ENCODE measurements at regions of chr6 and their contacts with region 1.

Region 1: GRCh38 chr6:43013843-43014433 is at the starts of genes KLHDC3 and MEA1:
- DNase-seq: peak; percentile 100
- H3K4me3 Mint-ChIP-seq: peak within 1 kb of the TSS; percentile 99
- H3K27ac Mint-ChIP-seq: peak within 1 kb of the TSS; percentile 99
- H3K4me1 Mint-ChIP-seq: peaks cover 32% of the 10 kb centered on the region
- H3K27me3 Mint-ChIP-seq: no peaks in the 10 kb centered on the region
- CTCF ChIP-seq: no peak
- total RNA-seq, gene KLHDC3: 35.6 and 39.2 TPM in 2 replicates
- total RNA-seq, gene MEA1: 71.8 and 79.9 TPM in 2 replicates

Region 2: DNA sequence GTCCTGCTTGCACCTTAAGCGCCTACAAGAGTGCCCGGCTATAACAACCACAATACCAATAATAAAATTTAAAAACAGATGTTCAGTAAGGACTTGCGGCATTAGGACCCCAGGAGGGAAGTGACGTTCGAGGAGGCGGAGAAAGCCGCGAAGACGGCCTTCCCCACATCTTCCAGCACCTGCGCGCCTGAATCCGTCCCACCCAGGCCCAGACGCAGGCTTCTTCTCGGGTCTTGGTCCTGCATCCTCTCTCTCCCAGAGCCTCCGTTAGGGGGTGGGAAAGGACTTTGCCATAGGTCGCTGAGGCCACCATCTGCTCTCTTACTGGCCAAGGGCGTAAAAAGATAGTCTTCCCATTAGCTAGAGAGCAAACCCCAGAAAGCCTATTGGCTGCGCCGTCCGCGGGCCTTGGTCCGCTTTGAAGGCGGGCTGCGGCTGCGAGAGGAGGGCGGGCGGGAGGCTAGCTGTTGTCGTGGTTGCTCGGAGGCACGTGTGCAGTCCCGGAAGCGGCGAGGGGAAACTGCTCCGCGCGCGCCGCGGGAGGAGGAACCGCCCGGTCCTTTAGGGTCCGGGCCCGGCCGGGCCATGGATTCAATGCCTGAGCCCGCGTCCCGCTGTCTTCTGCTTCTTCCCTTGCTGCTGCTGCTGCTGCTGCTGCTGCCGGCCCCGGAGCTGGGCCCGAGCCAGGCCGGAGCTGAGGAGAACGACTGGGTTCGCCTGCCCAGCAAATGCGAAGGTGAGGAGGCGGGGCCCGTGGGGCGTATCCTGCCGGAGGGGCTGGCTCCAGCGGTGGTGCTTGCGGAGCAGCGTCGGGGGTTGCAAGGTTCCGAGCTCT is 84.7 kb before region 1 on chr6 and contains the start of gene CNPY3:
- CTCF ChIA-PET with region 1: no interaction called
- POLR2A ChIA-PET with region 1: interaction called, 36 read pairs
- intact Hi-C with region 1: no loop called
- DNase-seq: peak; percentile 97
- H3K4me3 Mint-ChIP-seq: peak within 1 kb of the TSS; percentile 99
- H3K27ac Mint-ChIP-seq: peak within 1 kb of the TSS; percentile 97
- H3K4me1 Mint-ChIP-seq: peaks cover 40% of the 10 kb centered on the region
- H3K27me3 Mint-ChIP-seq: no peaks in the 10 kb centered on the region
- CTCF ChIP-seq: no peak
- total RNA-seq, gene CNPY3: 21.9 and 22.5 TPM in 2 replicates

Region 3: GRCh38 chr6:42984001-42984923 is 29.7 kb before region 1 on chr6 and contains the start of gene PPP2R5D:
- CTCF ChIA-PET with region 1: interaction called, 6 read pairs
- POLR2A ChIA-PET with region 1: interaction called, 46 read pairs
- intact Hi-C with region 1: loop called (anchors 1 kb)
- DNase-seq: peak; percentile 99
- H3K4me3 Mint-ChIP-seq: peak within 1 kb of the TSS; percentile 78
- H3K27ac Mint-ChIP-seq: peak within 1 kb of the TSS; percentile 90
- H3K4me1 Mint-ChIP-seq: peaks cover 39% of the 10 kb centered on the region
- H3K27me3 Mint-ChIP-seq: no peaks in the 10 kb centered on the region
- CTCF ChIP-seq: no peak
- total RNA-seq, gene PPP2R5D: 16.5 and 17.9 TPM in 2 replicates

Region 4: GRCh38 chr6:43053545-43054205 is 39.7 kb after region 1 on chr6 and contains the start of gene CUL7:
- CTCF ChIA-PET with region 1: interaction called, 4 read pairs
- POLR2A ChIA-PET with region 1: interaction called, 53 read pairs
- intact Hi-C with region 1: loop called (anchors 5 kb)
- DNase-seq: peak; percentile 97
- H3K4me3 Mint-ChIP-seq: peak within 1 kb of the TSS; percentile 96
- H3K27ac Mint-ChIP-seq: peak within 1 kb of the TSS; percentile 98
- H3K4me1 Mint-ChIP-seq: peaks cover 36% of the 10 kb centered on the region
- H3K27me3 Mint-ChIP-seq: no peaks in the 10 kb centered on the region
- CTCF ChIP-seq: no peak
- total RNA-seq, gene CUL7: 22.7 and 31.4 TPM in 2 replicates

Region 5: DNA sequence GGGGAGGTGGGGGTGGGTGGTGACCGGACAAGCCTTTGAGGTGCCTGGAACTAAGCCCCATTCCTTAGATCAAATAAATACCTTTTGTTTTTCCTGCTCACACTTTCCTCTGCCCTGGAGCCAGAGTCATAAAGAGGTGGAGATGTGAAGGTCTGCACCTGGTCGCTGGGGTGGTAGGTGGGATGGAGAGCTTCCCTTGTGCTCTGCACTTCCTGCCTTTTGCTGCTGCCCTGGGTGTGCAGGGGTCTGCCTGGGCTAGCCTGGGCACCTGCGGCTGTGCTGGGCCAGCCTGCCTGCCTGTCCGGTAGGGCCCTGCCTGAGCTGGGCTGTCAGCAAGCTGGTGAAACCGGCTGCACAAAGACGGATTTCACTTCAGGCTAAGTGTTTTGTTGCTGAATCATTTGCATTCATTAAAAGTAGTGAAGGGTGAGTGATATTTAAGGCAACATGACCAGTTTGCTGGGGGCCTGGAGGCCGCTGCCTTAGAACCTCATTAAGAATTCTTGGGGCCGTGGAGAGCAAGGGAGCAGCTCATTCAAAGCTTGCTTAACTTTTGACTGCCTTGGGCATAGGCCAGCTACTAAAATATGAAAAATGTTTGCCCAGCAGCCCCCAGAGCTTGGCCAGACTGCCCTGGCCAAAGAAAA is 82.6 kb after region 1 on chr6:
- CTCF ChIA-PET with region 1: no interaction called
- POLR2A ChIA-PET with region 1: interaction called, 10 read pairs
- intact Hi-C with region 1: no loop called
- DNase-seq: peak; percentile 83
- H3K4me3 Mint-ChIP-seq: peak overlapping the region; percentile 55
- H3K27ac Mint-ChIP-seq: peak overlapping the region; percentile 92
- H3K4me1 Mint-ChIP-seq: peaks cover 31% of the 10 kb centered on the region
- H3K27me3 Mint-ChIP-seq: no peaks in the 10 kb centered on the region
- CTCF ChIP-seq: no peak

Region 6: DNA sequence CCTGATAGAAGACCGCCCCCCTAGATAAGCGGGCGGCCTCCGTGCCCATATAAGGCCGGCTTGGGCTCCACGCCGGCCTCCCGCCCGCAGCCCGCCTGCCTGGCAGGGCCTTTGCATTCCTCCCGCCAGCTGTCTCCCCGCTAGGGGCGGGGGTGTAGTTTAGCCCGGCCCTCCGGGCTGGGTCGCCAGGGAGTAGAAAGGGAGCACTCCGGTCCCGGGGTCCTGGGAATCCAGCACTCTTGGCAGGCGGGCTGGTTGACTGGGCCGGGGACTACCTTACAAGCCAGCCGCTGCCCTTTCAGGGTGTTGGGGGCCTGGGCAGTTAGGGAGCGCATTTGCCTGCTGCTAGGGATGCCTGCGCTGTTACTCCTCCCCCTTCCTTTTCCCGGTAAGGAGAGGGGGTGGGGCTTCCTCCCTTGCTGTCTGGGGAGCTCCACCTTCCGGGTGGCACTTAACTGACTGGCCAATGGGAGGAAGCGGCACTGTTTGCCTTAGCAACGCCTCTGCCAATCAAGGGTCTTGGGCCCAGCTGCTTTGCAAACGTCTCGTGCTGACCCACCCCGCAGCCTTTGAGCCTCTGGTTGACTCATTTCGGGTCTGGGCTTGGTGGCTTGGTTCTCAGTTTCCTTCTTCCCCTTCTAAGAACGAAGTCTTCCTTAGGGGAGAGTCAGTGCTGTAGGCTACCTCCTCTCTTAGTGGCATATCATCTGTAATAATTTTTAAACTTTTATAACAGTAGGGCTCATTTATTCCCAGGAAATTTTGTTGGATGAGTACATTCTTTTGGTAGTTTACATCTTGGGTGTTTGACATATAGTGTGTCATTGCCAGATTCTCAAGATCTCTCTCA is 160.6 kb after region 1 on chr6:
- CTCF ChIA-PET with region 1: interaction called, 5 read pairs
- POLR2A ChIA-PET with region 1: interaction called, 10 read pairs
- intact Hi-C with region 1: no loop called
- DNase-seq: peak; percentile 99
- H3K4me3 Mint-ChIP-seq: peak overlapping the region; percentile 87
- H3K27ac Mint-ChIP-seq: peak overlapping the region; percentile 83
- H3K4me1 Mint-ChIP-seq: peaks cover 30% of the 10 kb centered on the region
- H3K27me3 Mint-ChIP-seq: no peaks in the 10 kb centered on the region
- CTCF ChIP-seq: no peak